ENCODE measurements at regions of chr5 and their contacts with region 1.

Region 1: DNA sequence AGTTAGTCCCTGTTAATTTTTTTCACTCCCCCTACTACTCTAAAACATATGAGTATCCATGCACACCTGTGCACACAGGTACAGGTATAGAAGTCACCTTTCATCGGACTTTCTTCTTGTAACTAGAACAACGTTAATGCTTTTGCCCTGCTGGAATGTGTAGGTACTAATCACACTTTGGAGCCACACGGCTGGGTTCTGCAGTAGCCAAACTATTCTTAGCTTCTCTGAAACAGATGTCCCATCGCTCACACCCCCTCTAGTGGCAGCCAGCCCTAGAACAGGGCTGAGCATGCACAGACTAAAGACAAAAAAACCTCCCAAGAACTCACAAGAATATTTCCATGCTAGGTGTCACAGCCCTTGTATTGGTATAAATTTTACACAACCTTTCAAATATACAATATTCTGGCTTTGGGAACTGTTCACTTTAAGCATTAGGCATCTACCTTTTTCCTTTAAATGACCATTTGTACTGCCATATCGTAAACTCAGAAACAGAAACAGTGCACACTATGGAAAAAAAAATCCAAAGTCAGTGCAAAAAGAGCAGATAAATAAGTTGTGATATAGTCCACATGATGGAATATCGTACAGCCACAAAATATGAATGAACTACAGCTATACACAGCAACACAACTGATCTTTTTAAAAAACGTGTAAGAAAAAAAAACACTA is 64.0 kb downstream of the RETREG1 start:
- DNase-seq: no peak
- H3K4me3 ChIP-seq: no peak overlapping the region
- CTCF ChIP-seq: peak; percentile 78

Region 2: DNA sequence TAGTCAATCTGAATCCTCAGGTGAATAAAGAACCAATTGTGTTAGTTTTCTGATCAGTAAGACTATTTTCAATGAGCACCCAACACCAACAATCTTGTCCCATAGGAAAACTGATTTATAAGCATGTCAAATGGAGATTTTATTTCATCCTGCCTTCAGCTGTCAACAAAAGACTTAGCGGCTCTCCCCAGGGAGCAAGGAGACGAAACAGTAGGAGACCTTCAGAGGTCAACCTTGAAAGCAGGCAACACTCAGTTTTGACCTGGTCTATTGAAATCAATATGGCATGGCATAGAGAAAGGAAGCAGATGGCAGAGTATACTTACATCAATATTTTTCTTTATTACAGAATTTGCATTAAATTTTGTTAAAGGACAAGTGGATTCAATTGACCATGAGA is 121.3 kb before region 1 on chr5:
- CTCF ChIA-PET with region 1: no interaction called
- POLR2A ChIA-PET with region 1: no interaction called
- DNase-seq: no peak
- H3K4me3 ChIP-seq: no peak overlapping the region
- CTCF ChIP-seq: no peak

Region 3: DNA sequence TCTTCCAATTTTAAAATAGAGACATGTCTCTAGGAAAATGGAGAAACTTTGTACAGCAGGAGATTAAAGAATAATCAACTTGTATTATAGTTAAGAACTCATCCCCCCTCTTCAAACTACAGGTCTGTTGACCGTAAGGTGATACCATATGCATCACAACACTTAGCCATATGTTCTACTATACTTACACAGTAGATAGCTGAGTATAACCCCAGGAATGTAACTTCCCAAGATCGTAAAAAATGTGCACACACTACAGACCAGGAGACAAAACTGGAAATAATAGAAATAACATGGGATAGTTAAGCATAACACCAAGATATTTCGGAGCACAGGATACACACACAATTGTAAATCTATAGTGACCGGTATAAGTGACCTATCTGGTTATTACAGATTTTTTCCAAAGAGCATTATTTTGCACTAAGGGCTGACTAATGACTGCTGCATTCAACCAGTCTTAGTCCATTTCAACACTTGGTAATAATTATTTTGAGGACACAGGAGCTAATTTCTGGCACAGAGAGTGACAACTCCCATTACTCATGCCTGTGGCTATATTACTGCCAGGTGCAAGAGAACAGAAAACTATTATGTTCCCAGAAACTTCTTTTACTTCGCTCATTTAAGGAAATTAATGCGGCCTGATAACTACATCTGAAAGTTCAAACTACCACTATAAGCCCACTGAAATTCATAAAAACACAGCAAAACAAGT is 71.8 kb before region 1 on chr5:
- CTCF ChIA-PET with region 1: interaction called, 254 read pairs
- POLR2A ChIA-PET with region 1: no interaction called
- DNase-seq: no peak
- H3K4me3 ChIP-seq: no peak overlapping the region
- CTCF ChIP-seq: no peak

Region 4: DNA sequence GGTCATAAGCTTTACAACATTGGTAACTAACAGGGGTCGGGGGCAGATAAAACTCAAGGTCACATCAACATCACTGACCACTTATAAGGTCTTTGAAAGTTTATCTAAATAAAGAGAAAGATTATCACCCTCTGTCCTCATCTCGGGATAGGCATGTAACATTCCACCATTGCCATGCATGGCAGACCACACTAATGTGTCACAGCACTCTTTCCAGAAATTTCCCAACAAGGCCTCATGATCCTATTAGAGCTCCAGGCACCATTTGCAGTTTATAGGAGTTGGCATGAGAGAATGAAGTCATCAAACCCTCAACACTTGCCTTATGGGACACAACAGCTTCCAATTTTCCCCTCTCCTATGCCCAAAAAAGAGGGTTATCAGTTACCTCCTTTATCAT is 55.3 kb before region 1 on chr5:
- CTCF ChIA-PET with region 1: interaction called, 254 read pairs
- POLR2A ChIA-PET with region 1: no interaction called
- DNase-seq: no peak
- H3K4me3 ChIP-seq: no peak overlapping the region
- CTCF ChIP-seq: no peak

Region 5: GRCh38 chr5:16539169-16539721 is 13.6 kb before region 1 on chr5:
- CTCF ChIA-PET with region 1: interaction called, 293 read pairs
- POLR2A ChIA-PET with region 1: no interaction called
- DNase-seq: peak; percentile 69
- H3K4me3 ChIP-seq: no peak overlapping the region; the same call in 1 of the 2 replicates
- CTCF ChIP-seq: no peak

Region 6: GRCh38 chr5:16656561-16657191 is 103.9 kb after region 1 on chr5:
- CTCF ChIA-PET with region 1: no interaction called
- POLR2A ChIA-PET with region 1: no interaction called
- DNase-seq: no peak
- H3K4me3 ChIP-seq: no peak overlapping the region
- CTCF ChIP-seq: no peak

Region 7: GRCh38 chr5:16726538-16726946 is 173.7 kb after region 1 on chr5:
- CTCF ChIA-PET with region 1: no interaction called
- POLR2A ChIA-PET with region 1: no interaction called
- DNase-seq: no peak
- H3K4me3 ChIP-seq: no peak overlapping the region
- CTCF ChIP-seq: no peak